Activated CD4-positive, alpha-beta T cell treated with anti-CD3 and anti-CD28 coated beads, Interleukin-2, amount 10 ng/mL, durations not matched to agents 24 days and 14 days (primary cell): ENCODE measurements at regions of chr13 and their contacts with region 1.

Region 1: DNA sequence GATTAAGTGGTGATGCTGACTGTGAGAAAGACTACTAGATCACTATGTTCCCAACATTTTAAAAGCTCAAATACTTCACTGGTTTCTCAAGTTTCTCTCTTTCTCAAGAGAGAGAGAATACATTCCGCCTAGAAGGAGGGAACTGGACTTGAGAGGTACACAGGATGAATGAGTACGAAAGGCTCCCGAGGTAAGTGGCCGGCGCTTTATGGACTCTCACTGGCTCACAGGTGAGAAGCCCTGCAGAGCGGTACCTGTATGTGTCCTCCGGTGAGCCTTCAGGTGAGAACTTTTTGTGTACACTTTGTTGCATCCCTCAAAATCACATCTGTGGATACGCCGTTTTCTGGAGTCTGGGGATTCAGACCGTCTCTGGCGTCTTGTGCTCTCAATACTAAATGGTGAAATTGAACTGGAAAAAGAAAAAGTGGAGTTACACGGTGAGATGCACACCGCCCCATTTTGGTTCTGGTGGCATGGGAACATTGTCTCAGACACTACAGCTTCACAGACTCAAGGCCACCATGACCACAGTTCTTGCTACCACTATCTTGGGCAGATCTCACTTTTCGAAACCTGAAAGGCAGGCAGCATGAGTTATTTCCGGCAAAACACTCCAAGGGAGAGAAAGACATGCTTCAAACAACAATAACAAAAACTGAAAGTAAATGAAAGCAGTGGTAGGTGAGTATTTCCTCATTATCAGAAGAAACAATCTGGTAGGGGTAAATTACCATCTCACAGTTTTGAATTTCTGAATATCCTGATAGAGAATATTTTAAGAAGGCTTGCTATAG is 418.9 kb downstream of the KLF12 start:
- DNase-seq: peak; percentile 89
- H3K4me3 Mint-ChIP-seq: peak overlapping the region; percentile 48
- H3K27ac Mint-ChIP-seq: peak overlapping the region; percentile 84
- H3K4me1 Mint-ChIP-seq: peaks cover 40% of the 10 kb centered on the region
- H3K27me3 Mint-ChIP-seq: no peaks in the 10 kb centered on the region

Region 2: GRCh38 chr13:73228546-73228945 is 486.8 kb before region 1 on chr13:
- intact Hi-C with region 1: loop called (anchors 2 kb)
- DNase-seq: peak; percentile 78
- H3K4me3 Mint-ChIP-seq: no peak overlapping the region
- H3K27ac Mint-ChIP-seq: no peak overlapping the region
- H3K4me1 Mint-ChIP-seq: peaks cover 27% of the 10 kb centered on the region
- H3K27me3 Mint-ChIP-seq: peaks cover 4% of the 10 kb centered on the region

Region 3: DNA sequence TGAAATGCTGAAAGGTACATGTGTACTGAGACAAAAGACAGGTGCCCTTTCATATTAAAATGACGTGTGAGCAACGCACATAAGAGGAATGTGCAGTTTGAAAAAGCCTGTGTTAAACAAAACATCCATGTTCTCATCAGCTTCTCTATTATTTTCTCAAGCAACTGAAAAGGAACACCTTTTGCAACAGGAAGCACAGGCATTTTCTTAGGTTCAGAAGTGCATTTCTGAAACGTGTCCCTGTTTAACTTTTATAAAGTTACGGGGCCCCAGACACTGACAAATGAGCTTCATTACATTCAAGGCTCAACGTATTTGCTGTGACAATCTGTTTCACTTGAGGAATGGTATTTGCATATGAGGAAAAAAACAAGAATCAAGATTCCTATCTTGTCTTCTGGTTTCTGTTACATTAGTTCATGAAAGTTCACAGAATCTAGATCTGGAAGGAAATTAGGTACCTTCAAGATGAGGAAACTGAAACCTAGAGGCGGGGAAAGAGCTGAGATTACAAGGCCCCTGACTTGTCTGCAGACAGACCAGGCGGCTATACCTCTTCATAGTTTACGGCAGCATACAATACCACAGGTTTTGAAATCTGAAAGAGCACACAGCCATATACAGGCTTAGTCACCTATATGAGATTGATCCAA is 12.8 kb before region 1 on chr13:
- intact Hi-C with region 1: loop called (anchors 1 kb)
- DNase-seq: peak; percentile 81
- H3K4me3 Mint-ChIP-seq: peak overlapping the region; percentile 62
- H3K27ac Mint-ChIP-seq: peak overlapping the region; percentile 57
- H3K4me1 Mint-ChIP-seq: peaks cover 26% of the 10 kb centered on the region
- H3K27me3 Mint-ChIP-seq: no peaks in the 10 kb centered on the region

Region 4: DNA sequence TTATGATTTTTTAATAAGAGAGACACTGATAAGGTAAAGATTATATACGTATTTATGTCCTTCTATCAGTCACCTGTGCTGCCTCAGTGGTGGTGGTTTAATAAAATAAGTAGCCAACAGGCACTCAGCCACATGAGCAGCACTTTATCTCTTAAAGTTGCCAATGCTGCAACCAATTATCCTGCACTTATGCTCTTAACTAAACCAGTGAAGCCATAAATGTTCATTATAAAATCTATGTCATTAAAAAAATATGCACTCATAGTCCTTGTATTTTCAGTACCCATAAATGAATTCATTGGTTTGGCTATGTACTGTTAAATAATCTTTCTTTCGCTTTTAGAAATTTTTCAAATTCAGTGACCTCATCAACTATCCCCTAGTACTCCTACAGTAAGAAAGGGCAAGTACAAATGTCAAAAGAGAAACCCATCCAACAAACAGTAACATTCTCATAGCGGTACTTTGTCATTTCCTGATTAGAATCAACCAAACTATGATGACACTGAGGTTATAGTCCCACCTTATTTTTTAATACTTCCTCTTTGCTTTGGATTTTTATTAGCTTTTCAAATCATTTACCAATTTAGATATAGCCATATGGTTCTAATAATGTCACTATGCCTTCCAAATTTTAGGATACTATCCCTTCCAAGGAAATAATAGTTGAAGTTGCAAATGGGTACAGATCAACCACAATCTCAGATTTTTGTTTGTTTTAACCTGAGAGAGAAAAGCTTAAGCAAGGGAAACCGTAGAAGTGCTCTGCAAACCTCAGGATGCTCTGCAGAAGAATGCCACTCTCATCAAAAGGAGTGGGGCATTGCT is 228.0 kb after region 1 on chr13:
- intact Hi-C with region 1: loop called (anchors 10 kb)
- DNase-seq: no peak
- H3K4me3 Mint-ChIP-seq: peak overlapping the region; percentile 24
- H3K27ac Mint-ChIP-seq: peak overlapping the region; percentile 69
- H3K4me1 Mint-ChIP-seq: peaks cover 25% of the 10 kb centered on the region
- H3K27me3 Mint-ChIP-seq: no peaks in the 10 kb centered on the region

Region 5: DNA sequence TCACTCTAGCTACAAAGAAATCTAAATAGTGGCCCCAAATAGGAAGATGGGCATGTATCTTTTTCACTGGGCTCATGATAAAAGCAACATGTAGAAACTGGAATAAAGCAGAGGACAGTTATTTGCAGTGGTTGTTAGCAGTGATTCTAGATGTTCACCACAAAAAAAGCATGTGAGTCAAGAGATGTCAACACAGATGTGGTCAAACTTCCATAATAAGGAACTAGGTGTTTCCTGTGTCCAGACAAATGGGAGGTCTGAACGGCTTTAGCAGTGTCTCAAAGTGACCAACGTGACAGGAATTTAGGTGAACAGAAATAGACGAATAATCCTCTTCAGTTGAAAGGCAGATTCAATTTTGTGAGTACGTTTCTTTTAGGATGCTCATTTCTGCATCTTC is 1603.9 kb after region 1 on chr13:
- intact Hi-C with region 1: loop called (anchors 5 kb)
- DNase-seq: no peak
- H3K4me3 Mint-ChIP-seq: peak overlapping the region; percentile 4
- H3K27ac Mint-ChIP-seq: peak overlapping the region; percentile 93
- H3K4me1 Mint-ChIP-seq: peaks cover 51% of the 10 kb centered on the region
- H3K27me3 Mint-ChIP-seq: no peaks in the 10 kb centered on the region